SK-N-SH (cell line): ENCODE measurements at regions of chr7 and their contacts with region 1.

Region 1: DNA sequence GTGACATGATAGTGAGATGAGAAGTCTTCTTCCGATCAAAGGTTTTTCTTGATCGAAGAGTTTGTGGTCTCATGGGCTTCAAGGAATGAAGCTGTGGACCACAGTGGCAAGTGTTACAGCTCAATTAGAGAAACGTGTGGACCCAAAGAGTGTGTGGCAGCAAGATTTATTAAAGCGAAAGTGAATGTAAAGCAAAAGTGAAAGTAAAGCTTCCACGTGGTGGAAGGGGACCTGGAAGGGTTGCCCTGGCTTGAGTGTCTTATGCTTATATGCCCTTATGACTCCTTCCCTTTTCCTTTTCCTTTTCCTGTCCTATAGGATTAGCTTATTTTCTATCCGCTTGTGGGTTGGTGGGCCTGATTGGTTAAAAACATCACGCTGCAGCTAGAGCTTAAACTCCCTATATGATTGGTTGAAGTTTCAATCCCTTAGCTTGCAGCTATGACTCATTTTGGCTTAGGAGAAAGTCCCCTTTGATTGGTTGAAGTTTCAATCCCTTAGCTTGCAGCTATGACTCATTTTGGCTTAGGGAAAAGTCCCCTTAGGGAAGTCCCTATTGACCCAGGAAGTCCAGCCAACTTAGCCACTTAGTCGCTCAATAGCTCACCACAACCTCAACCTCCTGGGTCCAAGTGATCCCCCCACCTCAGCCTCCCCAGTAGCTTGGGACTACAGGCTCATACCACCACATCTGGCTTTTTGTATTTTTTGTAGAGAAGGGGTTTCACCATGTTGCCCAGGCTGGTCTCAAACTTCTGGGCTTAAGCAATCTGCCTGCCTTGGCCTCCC is 34.7 kb downstream of the MRPS24 start:
- DNase-seq: no peak
- H3K4me3 ChIP-seq: no peak overlapping the region
- H3K27ac ChIP-seq: no peak overlapping the region
- H3K4me1 ChIP-seq: no peaks in the 10 kb centered on the region; a peak in 1 of 4 replicates
- H3K27me3 ChIP-seq: no peaks in the 10 kb centered on the region; the same call in 1 of the 2 replicates
- CTCF ChIP-seq: no peak
- EP300 ChIP-seq: no peak
- RAD21 ChIP-seq: no peak

Region 2: DNA sequence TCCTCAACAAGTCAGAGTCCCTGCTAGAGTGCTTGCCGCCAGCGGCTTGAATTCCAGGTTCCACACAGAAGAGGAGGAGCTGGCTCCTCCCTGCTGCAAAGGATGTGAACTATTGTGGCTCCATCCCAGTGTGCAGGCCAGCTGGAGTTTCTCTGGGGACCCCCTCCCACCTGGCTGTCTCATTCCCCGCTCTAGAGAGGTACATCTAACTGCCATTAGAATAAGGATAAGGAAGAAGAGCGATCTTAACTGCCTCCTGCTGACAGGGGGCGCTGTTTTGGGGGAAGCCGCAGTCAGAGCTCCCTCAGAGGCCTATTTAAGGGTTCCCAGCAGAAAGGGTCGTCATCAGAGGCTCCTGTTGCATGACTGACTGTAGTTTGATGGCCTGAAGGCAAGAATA is 763.1 kb before region 1 on chr7:
- CTCF ChIA-PET with region 1: no interaction called
- POLR2A ChIA-PET with region 1: no interaction called
- DNase-seq: peak; percentile 19
- H3K4me3 ChIP-seq: no peak overlapping the region; a peak in 1 of 4 replicates
- H3K27ac ChIP-seq: no peak overlapping the region
- H3K4me1 ChIP-seq: no peaks in the 10 kb centered on the region
- H3K27me3 ChIP-seq: peaks cover 23% of the 10 kb centered on the region
- CTCF ChIP-seq: peak; percentile 62
- EP300 ChIP-seq: no peak
- RAD21 ChIP-seq: peak; percentile 30; the same call in 1 of the 2 replicates

Region 3: GRCh38 chr7:43260980-43261878 is 573.4 kb before region 1 on chr7:
- CTCF ChIA-PET with region 1: interaction called, 15 read pairs
- POLR2A ChIA-PET with region 1: no interaction called
- DNase-seq: peak; percentile 81
- H3K4me3 ChIP-seq: no peak overlapping the region; a peak in 1 of 4 replicates
- H3K27ac ChIP-seq: no peak overlapping the region
- H3K4me1 ChIP-seq: no peaks in the 10 kb centered on the region
- H3K27me3 ChIP-seq: peaks cover 9% of the 10 kb centered on the region; the same call in 1 of the 2 replicates
- CTCF ChIP-seq: peak; percentile 100
- EP300 ChIP-seq: no peak
- RAD21 ChIP-seq: peak; percentile 89

Region 4: GRCh38 chr7:43647673-43648472 is 186.8 kb before region 1 on chr7:
- CTCF ChIA-PET with region 1: interaction called, 11 read pairs
- POLR2A ChIA-PET with region 1: no interaction called
- DNase-seq: peak; percentile 59
- H3K4me3 ChIP-seq: peak overlapping the region; percentile 20 to 44; a peak in 3 of 4 replicates
- H3K27ac ChIP-seq: peak overlapping the region; percentile 98 to 100
- H3K4me1 ChIP-seq: peaks cover 65 to 68% of the 10 kb centered on the region in 2 experiments
- H3K27me3 ChIP-seq: no peaks in the 10 kb centered on the region
- CTCF ChIP-seq: no peak
- EP300 ChIP-seq: peak; percentile 96 to 100
- RAD21 ChIP-seq: no peak

Region 5: DNA sequence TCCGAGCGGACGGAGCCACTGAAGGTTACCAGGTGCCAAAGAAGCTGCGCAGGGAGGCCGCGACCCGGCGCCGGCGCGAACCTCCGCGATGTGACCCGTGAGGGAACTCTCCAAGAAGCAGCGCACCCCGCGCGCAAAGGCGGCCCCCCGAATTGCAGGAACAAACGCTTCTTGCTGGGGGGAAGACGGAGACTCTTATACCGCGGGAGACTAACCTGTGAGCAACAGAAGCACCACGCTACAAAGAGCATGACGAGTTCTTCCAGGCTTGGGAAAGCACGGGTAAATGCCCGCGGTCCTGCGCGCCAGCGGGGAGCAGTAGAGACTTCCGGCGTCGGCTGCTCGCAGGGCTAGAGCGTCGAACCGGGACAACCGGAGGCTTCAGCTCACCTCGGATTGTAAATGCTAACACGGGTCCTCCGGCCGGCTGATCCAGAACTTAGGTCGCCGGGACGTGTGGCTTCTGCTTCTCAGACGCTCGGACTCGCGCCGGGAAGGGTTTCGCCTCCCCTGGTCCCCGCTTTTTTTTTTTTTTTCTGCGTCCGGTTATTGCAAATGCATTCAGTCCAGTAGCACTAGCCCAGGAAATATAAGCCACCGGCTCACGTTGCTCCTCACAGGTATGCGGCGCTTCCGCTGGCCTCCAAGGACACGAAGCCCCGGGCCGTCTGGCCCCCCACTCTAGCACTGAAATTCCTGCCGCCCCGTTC is 105.3 kb before region 1 on chr7 and contains the start of gene COA1:
- CTCF ChIA-PET with region 1: interaction called, 24 read pairs
- POLR2A ChIA-PET with region 1: interaction called, 3 read pairs
- DNase-seq: peak; percentile 95
- H3K4me3 ChIP-seq: peak within 1 kb of the TSS; percentile 93 to 97
- H3K27ac ChIP-seq: peak within 1 kb of the TSS; percentile 68 to 95
- H3K4me1 ChIP-seq: peaks cover 0 to 7% of the 10 kb centered on the region in 2 experiments; a peak in 1 of 4 replicates
- H3K27me3 ChIP-seq: no peaks in the 10 kb centered on the region
- CTCF ChIP-seq: peak; percentile 19; the same call in 1 of the 2 replicates
- EP300 ChIP-seq: no peak; a peak in 1 of 4 replicates
- RAD21 ChIP-seq: no peak
- polyA plus RNA-seq, gene COA1: 42.8 and 66.3 TPM in 2 replicates

Region 6: DNA sequence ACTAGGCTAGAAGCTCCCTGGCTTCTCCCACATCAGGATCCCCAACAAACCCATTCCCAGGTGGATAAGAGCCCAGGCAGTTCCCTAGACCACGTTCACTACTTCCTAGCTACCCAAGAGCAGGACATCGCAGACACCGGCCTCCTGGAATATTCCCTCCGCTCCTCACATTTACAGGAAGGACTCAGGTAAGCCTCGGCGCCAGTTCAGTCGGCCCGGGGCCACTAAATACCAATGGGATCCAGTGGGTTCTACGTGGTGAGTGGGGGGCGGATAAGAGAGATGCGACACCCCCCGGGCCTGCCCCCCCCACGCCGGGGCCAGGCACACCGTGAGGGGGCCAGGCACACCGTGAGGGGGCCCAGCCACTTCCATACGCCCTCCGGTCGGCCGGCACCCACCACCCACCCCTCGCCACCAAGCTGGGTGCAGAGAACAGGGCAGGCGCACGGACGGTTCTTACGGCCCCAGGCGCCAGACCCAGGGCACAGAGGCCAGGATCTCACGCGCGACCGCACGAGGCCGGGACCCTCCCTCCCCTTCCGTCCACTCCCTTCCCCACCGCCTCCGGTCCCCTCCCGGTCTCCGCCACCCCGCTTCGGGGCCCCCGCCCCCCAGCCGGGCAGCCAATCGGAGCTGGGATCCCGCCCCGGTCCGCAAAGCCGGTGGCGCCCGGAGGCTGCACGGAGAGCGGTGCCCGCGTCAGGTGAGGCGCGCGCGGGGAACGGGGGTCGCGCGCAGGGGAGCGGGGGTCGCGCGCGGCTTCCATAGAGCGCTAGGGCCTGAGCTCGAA is 76.4 kb before region 1 on chr7 and contains the start of gene BLVRA:
- CTCF ChIA-PET with region 1: interaction called, 19 read pairs
- POLR2A ChIA-PET with region 1: no interaction called
- DNase-seq: peak; percentile 100
- H3K4me3 ChIP-seq: peak within 1 kb of the TSS; percentile 74 to 83
- H3K27ac ChIP-seq: peak within 1 kb of the TSS; percentile 66 to 75
- H3K4me1 ChIP-seq: peaks cover 4 to 14% of the 10 kb centered on the region in 2 experiments; a peak in 2 of 4 replicates
- H3K27me3 ChIP-seq: no peaks in the 10 kb centered on the region
- CTCF ChIP-seq: no peak
- EP300 ChIP-seq: no peak
- RAD21 ChIP-seq: no peak
- polyA plus RNA-seq, gene BLVRA: 111 and 123 TPM in 2 replicates

Region 7: GRCh38 chr7:43850348-43851116 is 15.9 kb after region 1 on chr7:
- CTCF ChIA-PET with region 1: interaction called, 83 read pairs
- POLR2A ChIA-PET with region 1: interaction called, 5 read pairs
- DNase-seq: no peak
- H3K4me3 ChIP-seq: no peak overlapping the region
- H3K27ac ChIP-seq: no peak overlapping the region
- H3K4me1 ChIP-seq: peaks cover 0 to 6% of the 10 kb centered on the region in 2 experiments; a peak in 1 of 4 replicates
- H3K27me3 ChIP-seq: 0 out of 2 replicates have a peak, but pooled peaks cover 5% of the 10 kb centered on the region
- CTCF ChIP-seq: no peak
- EP300 ChIP-seq: no peak
- RAD21 ChIP-seq: no peak

Region 8: GRCh38 chr7:43954524-43955228 is 120.0 kb after region 1 on chr7:
- CTCF ChIA-PET with region 1: interaction called, 37 read pairs
- POLR2A ChIA-PET with region 1: no interaction called
- DNase-seq: peak; percentile 81
- H3K4me3 ChIP-seq: no peak overlapping the region
- H3K27ac ChIP-seq: no peak overlapping the region
- H3K4me1 ChIP-seq: no peaks in the 10 kb centered on the region
- H3K27me3 ChIP-seq: no peaks in the 10 kb centered on the region
- CTCF ChIP-seq: peak; percentile 70
- EP300 ChIP-seq: peak in 1 of 2 experiments; percentile 38; a peak in 1 of 4 replicates
- RAD21 ChIP-seq: peak; percentile 99

Region 9: DNA sequence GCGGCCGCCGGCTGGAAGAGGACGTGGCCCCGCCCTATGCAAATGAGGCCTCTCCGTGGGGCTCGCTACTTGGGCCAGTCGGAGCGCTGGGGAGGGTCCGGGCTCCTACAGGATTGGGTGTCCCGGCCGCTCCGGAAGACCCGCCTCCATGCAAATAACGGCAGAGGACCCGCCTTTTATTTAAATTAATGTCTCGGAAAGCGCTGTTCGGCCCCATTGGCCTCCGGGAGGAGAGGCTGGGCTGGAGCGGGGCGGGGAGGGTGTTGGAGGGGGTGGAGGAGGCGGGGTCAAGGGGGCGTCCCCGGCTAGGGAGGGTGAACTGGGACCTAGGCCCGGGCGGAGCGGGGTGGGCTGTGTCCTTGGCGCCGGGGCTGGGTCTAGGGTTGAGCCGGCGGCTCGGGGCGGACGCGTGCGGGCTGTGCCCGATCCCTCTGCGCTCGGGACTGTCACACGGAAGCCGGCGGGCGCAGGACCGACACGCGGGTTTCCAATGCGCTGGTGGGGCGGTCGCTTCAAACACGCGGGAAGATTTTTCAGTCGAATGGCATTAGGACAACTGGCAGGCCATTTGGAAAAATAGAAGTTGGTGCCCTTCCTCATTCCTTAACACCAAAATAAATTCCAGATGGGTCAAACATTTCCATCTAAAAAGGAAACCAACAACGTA is 248.0 kb after region 1 on chr7:
- CTCF ChIA-PET with region 1: no interaction called
- POLR2A ChIA-PET with region 1: no interaction called
- DNase-seq: peak; percentile 100
- H3K4me3 ChIP-seq: peak overlapping the region; percentile 55 to 69
- H3K27ac ChIP-seq: peak overlapping the region; percentile 83 to 100
- H3K4me1 ChIP-seq: peaks cover 14 to 18% of the 10 kb centered on the region in 2 experiments
- H3K27me3 ChIP-seq: no peaks in the 10 kb centered on the region
- CTCF ChIP-seq: no peak
- EP300 ChIP-seq: no peak; a peak in 1 of 4 replicates
- RAD21 ChIP-seq: no peak